ENCODE measurements at regions of chr12 and their contacts with region 1.

Region 1: DNA sequence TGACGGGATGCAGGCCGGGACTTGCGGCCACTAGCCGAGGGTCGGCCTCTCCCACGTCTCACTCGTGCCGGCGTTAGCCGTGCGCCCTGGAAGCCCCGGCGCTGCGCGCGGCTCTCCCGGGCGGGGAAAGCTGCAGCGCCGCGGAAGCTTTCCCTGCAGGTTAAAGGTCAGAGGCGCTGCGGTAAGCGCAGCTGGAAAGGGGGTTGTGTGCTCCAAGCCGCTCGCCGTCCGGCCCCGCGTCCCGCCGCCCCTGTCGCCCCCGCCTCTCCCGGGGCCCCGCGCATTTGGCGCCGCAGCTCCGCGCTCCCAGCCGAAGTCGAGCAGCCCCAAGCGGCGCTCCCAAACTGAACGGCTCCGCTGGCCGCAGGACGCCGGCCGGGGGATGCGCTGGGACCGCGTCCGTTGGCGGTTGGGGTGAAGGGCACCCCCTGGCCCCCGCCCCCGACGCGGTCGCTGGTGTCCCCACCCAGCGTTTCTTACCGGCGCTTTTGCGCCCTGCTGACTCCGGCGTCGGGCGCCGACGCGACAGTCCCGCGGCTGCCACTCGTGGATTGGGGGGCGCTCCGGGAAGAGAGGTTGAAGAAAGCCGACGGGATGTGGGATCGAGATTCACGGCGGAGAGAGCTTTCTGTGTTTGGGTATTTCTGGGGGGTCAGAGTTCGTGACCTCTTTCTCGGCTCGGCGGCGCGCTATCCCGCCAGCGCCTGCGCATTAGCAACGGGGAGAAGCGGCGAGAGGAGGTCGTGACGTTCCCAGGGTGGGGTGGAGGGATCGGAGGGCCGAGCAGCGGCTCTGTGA is at the start of gene NR2C1:
- DNase-seq: peak; percentile 96
- H3K4me3 Mint-ChIP-seq: peak within 1 kb of the TSS; percentile 89
- H3K27ac Mint-ChIP-seq: peak within 1 kb of the TSS; percentile 89
- H3K4me1 Mint-ChIP-seq: peaks cover 20% of the 10 kb centered on the region
- H3K27me3 Mint-ChIP-seq: no peaks in the 10 kb centered on the region
- total RNA-seq, gene NR2C1: 25.5 to 27.1 TPM

Region 2: GRCh38 chr12:94941440-94941862 is 131.6 kb before region 1 on chr12:
- CTCF ChIA-PET with region 1: no interaction called
- POLR2A ChIA-PET with region 1: no interaction called
- intact Hi-C with region 1: loop called (anchors 5 kb)
- DNase-seq: peak; percentile 82
- H3K4me3 Mint-ChIP-seq: no peak overlapping the region
- H3K27ac Mint-ChIP-seq: peak overlapping the region; percentile 63
- H3K4me1 Mint-ChIP-seq: peaks cover 39% of the 10 kb centered on the region
- H3K27me3 Mint-ChIP-seq: peaks cover 2% of the 10 kb centered on the region

Region 3: DNA sequence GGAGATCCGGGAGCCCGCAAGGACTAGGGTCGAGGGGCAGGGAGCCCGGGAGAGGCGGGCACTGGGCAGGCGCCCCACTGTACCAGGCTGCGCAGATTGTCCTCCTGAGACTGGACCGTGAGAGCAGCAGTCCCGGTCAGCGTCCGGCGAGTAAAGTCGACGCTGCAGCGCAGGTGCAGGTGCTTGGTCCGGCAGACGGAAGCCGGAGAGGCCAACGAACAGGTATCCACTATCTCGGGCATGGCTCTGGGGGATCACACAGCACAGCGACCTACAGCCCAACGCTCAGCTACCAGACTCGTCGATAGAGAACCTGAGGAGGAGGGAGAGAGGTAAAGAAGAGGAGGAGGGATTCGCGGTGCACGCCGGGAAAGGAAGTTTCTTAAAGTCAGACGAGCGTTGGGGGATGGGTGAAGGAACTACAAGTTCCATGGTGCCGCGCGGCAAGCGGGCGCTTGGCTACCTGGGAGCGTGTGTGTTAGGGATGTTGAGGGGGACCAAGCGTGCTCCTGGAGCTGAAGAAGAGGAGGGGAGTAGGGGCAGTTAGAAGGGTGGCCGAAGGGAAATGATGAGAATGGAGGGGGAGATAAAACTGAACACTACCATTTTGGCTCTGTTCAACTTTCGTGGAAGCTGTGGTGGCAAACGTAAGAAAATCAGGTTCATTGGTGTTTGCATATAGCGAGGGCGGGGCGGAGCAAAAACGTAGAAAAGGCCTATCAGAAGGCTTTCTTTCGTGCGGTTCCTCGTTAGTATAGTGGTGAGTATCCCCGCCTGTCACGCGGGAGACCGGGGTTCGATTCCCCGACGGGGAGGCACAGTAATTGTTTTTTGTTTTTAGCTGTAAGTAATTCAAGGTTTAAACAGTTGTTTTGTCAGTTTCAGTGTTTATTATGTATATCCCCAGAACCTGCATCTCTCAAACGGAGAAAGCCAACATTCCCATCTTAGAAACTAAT is 962.5 kb after region 1 on chr12 and contains the start of gene LTA4H:
- CTCF ChIA-PET with region 1: no interaction called
- POLR2A ChIA-PET with region 1: no interaction called
- intact Hi-C with region 1: loop called (anchors 2 kb)
- DNase-seq: peak; percentile 97
- H3K4me3 Mint-ChIP-seq: no peak within 1 kb of the TSS
- H3K27ac Mint-ChIP-seq: no peak within 1 kb of the TSS
- H3K4me1 Mint-ChIP-seq: peaks cover 13% of the 10 kb centered on the region
- H3K27me3 Mint-ChIP-seq: no peaks in the 10 kb centered on the region
- total RNA-seq, gene LTA4H: 106 to 110 TPM